Ascending aorta (tissue), 2 donors: ENCODE measurements at regions of chr1 and their contacts with region 1.

Region 1: GRCh38 chr1:31155216-31155841 is 84.4 kb downstream of the NKAIN1 start:
- DNase-seq: peak in 1 of 2 donors; percentile 72
- H3K4me3 ChIP-seq: peak overlapping the region; percentile 52 to 90
- H3K27ac ChIP-seq: peak overlapping the region; percentile 82 to 88
- H3K4me1 ChIP-seq: peaks cover 0 to 7% of the 10 kb centered on the region in 2 donors
- H3K27me3 ChIP-seq: no peaks in the 10 kb centered on the region
- CTCF ChIP-seq: peak in 2 of 3 experiments; percentile 29 to 35

Region 2: GRCh38 chr1:31170486-31170735 is 15.1 kb after region 1 on chr1:
- intact Hi-C with region 1: loop called (anchors 1 kb)
- DNase-seq: no peak
- H3K4me3 ChIP-seq: no peak overlapping the region
- H3K27ac ChIP-seq: peak overlapping the region; percentile 79 to 88
- H3K4me1 ChIP-seq: peaks cover 4 to 7% of the 10 kb centered on the region in 2 donors
- H3K27me3 ChIP-seq: no peaks in the 10 kb centered on the region
- CTCF ChIP-seq: no peak